Activated B cell treated with CpG ODN at 0.5 μM for 24 hours (primary cell): ENCODE measurements at regions of chr3 and their contacts with region 1.

Region 1: GRCh38 chr3:111859974-111860859 is 1.2 kb downstream of the PHLDB2 start:
- DNase-seq: peak; percentile 52
- ATAC-seq: peak; percentile 80
- H3K4me3 Mint-ChIP-seq: peak overlapping the region; percentile 91
- H3K27ac Mint-ChIP-seq: peak overlapping the region; percentile 87
- H3K4me1 Mint-ChIP-seq: peaks cover 18% of the 10 kb centered on the region
- H3K27me3 Mint-ChIP-seq: peaks cover 9% of the 10 kb centered on the region
- CTCF ChIP-seq: no peak

Region 2: DNA sequence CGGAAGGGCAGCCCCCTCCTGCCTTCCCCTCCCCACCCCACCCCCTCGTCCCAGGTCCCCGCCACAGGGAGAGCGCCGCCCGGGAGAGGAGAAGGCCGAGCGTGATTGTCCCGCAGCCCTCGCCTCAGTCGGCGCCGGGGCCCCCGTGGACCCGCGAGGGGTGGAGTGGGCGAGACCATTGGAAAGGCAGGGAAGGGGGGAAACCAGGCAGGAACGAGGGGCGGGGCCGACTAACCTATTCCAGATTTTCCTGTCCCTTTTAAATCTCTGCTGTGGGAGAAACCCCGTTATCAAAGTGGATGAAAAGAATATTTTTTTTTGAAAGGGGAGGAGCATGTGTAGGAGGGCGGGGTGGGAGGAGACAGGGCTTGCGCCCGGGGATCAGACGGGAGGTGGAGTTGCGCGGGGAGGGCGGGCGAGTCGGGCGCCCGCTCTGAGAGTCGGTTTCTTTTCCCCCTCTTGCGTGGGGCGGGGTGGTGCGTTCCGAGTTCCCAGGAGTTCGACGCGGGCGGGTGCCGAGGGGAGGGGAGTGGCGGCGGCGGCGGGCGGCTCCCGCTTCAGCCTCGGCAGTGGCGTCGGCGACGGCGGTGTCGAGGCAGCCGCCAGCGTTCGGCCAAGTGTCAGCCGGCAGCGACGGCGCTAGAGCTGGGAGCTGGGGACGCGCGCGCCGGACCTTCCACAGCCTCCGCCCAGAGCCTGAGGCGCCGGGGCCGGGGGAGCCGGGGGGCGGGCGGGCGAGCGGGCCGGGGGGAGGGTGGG is 788.8 kb before region 1 on chr3 and contains the start of gene NECTIN3:
- CTCF ChIA-PET with region 1: no interaction called
- POLR2A ChIA-PET with region 1: no interaction called
- intact Hi-C with region 1: loop called (anchors 10 kb)
- DNase-seq: peak; percentile 53
- ATAC-seq: peak; percentile 92
- H3K4me3 Mint-ChIP-seq: peak within 1 kb of the TSS; percentile 90
- H3K27ac Mint-ChIP-seq: no peak within 1 kb of the TSS
- H3K4me1 Mint-ChIP-seq: peaks cover 29% of the 10 kb centered on the region
- H3K27me3 Mint-ChIP-seq: peaks cover 46% of the 10 kb centered on the region
- CTCF ChIP-seq: no peak
- total RNA-seq, gene NECTIN3: 0.71 and 0.78 TPM in 2 replicates

Region 3: GRCh38 chr3:111650378-111651275 is 209.6 kb before region 1 on chr3:
- CTCF ChIA-PET with region 1: no interaction called
- POLR2A ChIA-PET with region 1: no interaction called
- intact Hi-C with region 1: no loop called
- DNase-seq: no peak
- ATAC-seq: no peak
- H3K4me3 Mint-ChIP-seq: no peak overlapping the region
- H3K27ac Mint-ChIP-seq: no peak overlapping the region
- H3K4me1 Mint-ChIP-seq: peaks cover 53% of the 10 kb centered on the region
- H3K27me3 Mint-ChIP-seq: no peaks in the 10 kb centered on the region
- CTCF ChIP-seq: no peak

Region 4: GRCh38 chr3:111967651-111968274 is 107.5 kb after region 1 on chr3:
- CTCF ChIA-PET with region 1: interaction called, 27 read pairs
- POLR2A ChIA-PET with region 1: no interaction called
- intact Hi-C with region 1: loop called (anchors 2 kb)
- DNase-seq: peak; percentile 39
- ATAC-seq: peak; percentile 90
- H3K4me3 Mint-ChIP-seq: peak overlapping the region; percentile 4
- H3K27ac Mint-ChIP-seq: no peak overlapping the region
- H3K4me1 Mint-ChIP-seq: peaks cover 5% of the 10 kb centered on the region
- H3K27me3 Mint-ChIP-seq: no peaks in the 10 kb centered on the region
- CTCF ChIP-seq: peak; percentile 97